ENCODE measurements at regions of chr13 and their contacts with region 1.

Region 1: DNA sequence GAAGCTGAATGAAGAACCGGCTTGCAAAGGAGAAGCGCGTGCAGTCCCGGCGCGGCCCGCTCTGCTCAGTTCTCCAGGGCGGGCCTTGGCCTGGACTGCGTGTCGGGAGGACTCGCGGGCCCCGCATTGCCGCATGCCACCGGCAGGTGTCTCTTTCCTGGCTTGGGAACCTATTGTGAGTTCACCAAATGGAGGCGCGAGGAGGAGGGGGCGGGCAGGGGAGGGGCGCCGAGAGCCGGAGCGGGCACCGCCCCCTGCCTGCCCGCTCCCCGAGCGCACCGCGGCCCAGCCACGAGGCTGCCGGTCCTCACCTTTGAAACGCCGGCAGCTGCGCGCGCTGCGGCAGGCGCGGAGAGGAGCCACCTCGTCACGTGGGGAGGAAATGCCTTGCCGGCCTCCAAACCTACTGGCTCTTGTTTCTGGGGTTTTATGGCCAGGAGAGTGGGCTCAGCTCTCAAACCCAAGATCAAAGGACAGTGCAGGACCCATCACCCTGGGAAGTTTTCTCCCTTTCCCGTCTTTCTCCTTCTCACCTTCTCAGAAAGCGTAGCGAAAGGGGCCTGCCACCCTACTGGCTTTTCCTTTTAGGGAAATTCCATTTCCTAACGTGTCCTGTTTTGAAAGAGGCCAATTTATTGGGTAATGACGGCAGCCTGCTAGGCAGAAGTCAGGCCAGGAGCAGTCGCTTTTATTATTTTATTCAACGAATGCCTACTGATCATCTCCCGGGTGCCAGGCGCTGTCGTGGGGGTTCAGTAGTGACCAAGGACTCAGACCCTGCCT is 13.8 kb upstream of the UBE2L5 start:
- DNase-seq: peak; percentile 96
- ATAC-seq: peak; percentile 93
- H3K4me3 Mint-ChIP-seq: peak overlapping the region; percentile 39
- H3K27ac Mint-ChIP-seq: peak overlapping the region; percentile 37
- H3K4me1 Mint-ChIP-seq: peaks cover 20% of the 10 kb centered on the region
- H3K27me3 Mint-ChIP-seq: no peaks in the 10 kb centered on the region

Region 2: GRCh38 chr13:29254626-29255370 is 1153.7 kb before region 1 on chr13:
- CTCF ChIA-PET with region 1: no interaction called
- POLR2A ChIA-PET with region 1: no interaction called
- intact Hi-C with region 1: no loop called
- DNase-seq: no peak
- ATAC-seq: no peak
- H3K4me3 Mint-ChIP-seq: no peak overlapping the region
- H3K27ac Mint-ChIP-seq: no peak overlapping the region
- H3K4me1 Mint-ChIP-seq: no peaks in the 10 kb centered on the region
- H3K27me3 Mint-ChIP-seq: peaks cover 12% of the 10 kb centered on the region

Region 3: DNA sequence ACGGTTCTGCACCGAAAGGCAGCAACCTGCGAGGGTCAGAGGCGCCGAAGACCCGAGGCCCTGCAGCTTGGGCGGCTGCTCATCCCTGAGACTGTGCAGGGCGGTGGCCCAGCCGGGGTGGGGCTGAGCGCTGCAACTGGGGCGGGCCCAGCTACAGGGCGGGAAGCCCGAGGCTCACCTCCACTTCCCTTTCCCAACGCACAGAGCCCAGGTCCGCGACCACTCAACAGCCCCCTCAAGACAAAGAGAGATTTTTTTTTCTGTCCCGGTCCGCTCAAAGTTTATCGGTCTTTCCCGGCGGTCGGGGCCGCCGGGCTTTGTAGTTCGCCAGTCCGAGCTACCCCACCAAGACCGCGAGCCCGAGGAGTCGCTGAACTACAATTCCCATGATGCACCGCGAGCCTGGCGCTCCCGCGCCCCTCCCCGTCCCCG is 101.7 kb before region 1 on chr13:
- CTCF ChIA-PET with region 1: interaction called, 4 read pairs
- POLR2A ChIA-PET with region 1: no interaction called
- intact Hi-C with region 1: loop called in 1 of 2 experiments (anchors 1 kb)
- DNase-seq: peak; percentile 95
- ATAC-seq: peak; percentile 91
- H3K4me3 Mint-ChIP-seq: peak overlapping the region; percentile 80
- H3K27ac Mint-ChIP-seq: peak overlapping the region; percentile 79
- H3K4me1 Mint-ChIP-seq: peaks cover 31% of the 10 kb centered on the region
- H3K27me3 Mint-ChIP-seq: no peaks in the 10 kb centered on the region

Region 4: GRCh38 chr13:30395192-30396084 is 13.1 kb before region 1 on chr13:
- CTCF ChIA-PET with region 1: interaction called, 15 read pairs
- POLR2A ChIA-PET with region 1: no interaction called
- intact Hi-C with region 1: loop called in 1 of 2 experiments (anchors 2 kb)
- DNase-seq: peak; percentile 85
- ATAC-seq: peak; percentile 68
- H3K4me3 Mint-ChIP-seq: peak overlapping the region; percentile 82
- H3K27ac Mint-ChIP-seq: peak overlapping the region; percentile 96
- H3K4me1 Mint-ChIP-seq: peaks cover 26% of the 10 kb centered on the region
- H3K27me3 Mint-ChIP-seq: no peaks in the 10 kb centered on the region

Region 5: GRCh38 chr13:30429721-30430694 is 21.5 kb after region 1 on chr13:
- CTCF ChIA-PET with region 1: interaction called, 6 read pairs
- POLR2A ChIA-PET with region 1: no interaction called
- intact Hi-C with region 1: loop called in 1 of 2 experiments (anchors 2 kb)
- DNase-seq: peak; percentile 50
- ATAC-seq: peak; percentile 99
- H3K4me3 Mint-ChIP-seq: peak overlapping the region; percentile 37
- H3K27ac Mint-ChIP-seq: peak overlapping the region; percentile 93
- H3K4me1 Mint-ChIP-seq: peaks cover 30% of the 10 kb centered on the region
- H3K27me3 Mint-ChIP-seq: no peaks in the 10 kb centered on the region

Region 6: DNA sequence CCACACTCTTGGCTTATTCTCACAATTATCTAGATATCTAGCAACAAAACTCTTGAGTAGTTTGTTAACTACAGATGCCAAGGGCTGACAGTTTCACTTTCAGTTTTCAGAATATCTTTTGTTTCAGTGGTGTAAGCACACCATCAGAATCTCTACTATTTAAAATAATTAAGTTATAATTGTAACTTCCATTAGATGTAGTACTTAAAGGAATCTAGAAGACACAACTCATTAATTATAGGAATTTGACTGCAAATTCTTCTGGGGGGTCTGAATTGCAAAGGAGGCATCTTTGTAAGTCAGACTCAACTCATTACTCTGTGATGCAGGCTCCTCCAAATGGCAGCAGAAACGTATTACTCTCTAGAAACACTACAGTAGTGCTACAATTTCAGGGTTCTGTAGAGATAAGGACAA is 164.4 kb after region 1 on chr13:
- CTCF ChIA-PET with region 1: interaction called, 4 read pairs
- POLR2A ChIA-PET with region 1: no interaction called
- intact Hi-C with region 1: loop called in 1 of 2 experiments (anchors 10 kb)
- DNase-seq: peak; percentile 27
- ATAC-seq: peak; percentile 54
- H3K4me3 Mint-ChIP-seq: peak overlapping the region; percentile 55
- H3K27ac Mint-ChIP-seq: peak overlapping the region; percentile 72
- H3K4me1 Mint-ChIP-seq: peaks cover 40% of the 10 kb centered on the region
- H3K27me3 Mint-ChIP-seq: no peaks in the 10 kb centered on the region

Region 7: GRCh38 chr13:30600496-30600895 is 192.0 kb after region 1 on chr13:
- CTCF ChIA-PET with region 1: no interaction called
- POLR2A ChIA-PET with region 1: no interaction called
- intact Hi-C with region 1: no loop called
- DNase-seq: no peak
- ATAC-seq: no peak
- H3K4me3 Mint-ChIP-seq: no peak overlapping the region
- H3K27ac Mint-ChIP-seq: no peak overlapping the region
- H3K4me1 Mint-ChIP-seq: no peaks in the 10 kb centered on the region
- H3K27me3 Mint-ChIP-seq: no peaks in the 10 kb centered on the region